ENCODE measurements at regions of chr11 and their contacts with region 1.

Region 1: GRCh38 chr11:65418711-65419459 is 3.7 kb upstream of the NEAT1 start:
- DNase-seq: peak; percentile 96 to 99 (median 98)
- H3K4me3 ChIP-seq: peak overlapping the region; percentile 25 to 100 (median 41)
- H3K4me3 Mint-ChIP-seq: peak overlapping the region; percentile 90 to 100
- H3K27ac ChIP-seq: peak overlapping the region; percentile 96 to 100
- H3K27ac Mint-ChIP-seq: peak overlapping the region; percentile 99 to 100 (median 100)
- H3K4me1 ChIP-seq: peaks cover 59 to 61% of the 10 kb centered on the region in 2 donors
- H3K4me1 Mint-ChIP-seq: peaks cover 45% of the 10 kb centered on the region
- H3K27me3 ChIP-seq: no peaks in the 10 kb centered on the region
- H3K27me3 Mint-ChIP-seq: peaks cover 0 to 23% (median 12%) of the 10 kb centered on the region in 3 donors
- CTCF ChIP-seq: no peak

Region 2: DNA sequence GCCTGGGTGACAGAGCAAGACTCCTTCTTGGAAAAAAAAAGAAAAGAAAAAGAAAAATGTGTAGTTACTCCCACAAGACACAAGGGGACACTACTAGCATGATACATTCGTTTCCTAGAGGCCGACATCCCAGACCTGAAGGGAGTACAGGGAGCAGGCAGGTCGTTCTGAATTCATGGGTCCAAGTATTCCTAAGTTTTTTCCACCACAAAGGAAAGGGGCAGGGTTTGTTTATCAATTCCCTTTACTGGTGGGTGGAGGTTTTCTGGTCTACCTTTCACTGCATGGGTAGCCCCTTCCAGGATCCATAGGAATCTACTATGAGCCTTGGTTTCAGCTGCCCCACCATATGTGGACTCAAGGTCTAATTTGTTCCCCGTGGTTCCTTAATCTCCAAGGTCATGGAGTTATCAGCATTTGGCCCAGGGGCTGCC is 52.5 kb before region 1 on chr11:
- intact Hi-C with region 1: loop called in 1 of 2 experiments (anchors 10 kb)
- DNase-seq: peak; percentile 51 to 72 (median 71)
- H3K4me3 ChIP-seq: no peak overlapping the region
- H3K4me3 Mint-ChIP-seq: no peak overlapping the region
- H3K27ac ChIP-seq: no peak overlapping the region
- H3K27ac Mint-ChIP-seq: no peak overlapping the region
- H3K4me1 ChIP-seq: peaks cover 30 to 37% of the 10 kb centered on the region in 2 donors
- H3K4me1 Mint-ChIP-seq: peaks cover 33% of the 10 kb centered on the region
- H3K27me3 ChIP-seq: no peaks in the 10 kb centered on the region
- H3K27me3 Mint-ChIP-seq: peaks cover 1 to 4% (median 1%) of the 10 kb centered on the region in 3 donors
- CTCF ChIP-seq: peak; percentile 82

Region 3: GRCh38 chr11:65382033-65382807 is 36.7 kb before region 1 on chr11 and contains the start of gene SLC25A45:
- intact Hi-C with region 1: loop called (anchors 2 to 5 kb)
- DNase-seq: peak; percentile 96 to 99 (median 98)
- H3K4me3 ChIP-seq: peak within 1 kb of the TSS; percentile 21 to 73 (median 54)
- H3K4me3 Mint-ChIP-seq: peak within 1 kb of the TSS; percentile 89 to 94
- H3K27ac ChIP-seq: peak within 1 kb of the TSS; percentile 89 to 100
- H3K27ac Mint-ChIP-seq: peak within 1 kb of the TSS; percentile 99 to 100 (median 100)
- H3K4me1 ChIP-seq: peaks cover 57 to 75% of the 10 kb centered on the region in 2 donors
- H3K4me1 Mint-ChIP-seq: peaks cover 58% of the 10 kb centered on the region
- H3K27me3 ChIP-seq: no peaks in the 10 kb centered on the region
- H3K27me3 Mint-ChIP-seq: peaks cover 0 to 2% (median 0%) of the 10 kb centered on the region in 3 donors
- CTCF ChIP-seq: peak; percentile 87
- polyA plus RNA-seq, gene SLC25A45: 3.7 to 11.3 (median 4.1) TPM

Region 4: GRCh38 chr11:65497141-65498041 is 78.5 kb after region 1 on chr11:
- intact Hi-C with region 1: loop called (anchors 1 to 2 kb)
- DNase-seq: peak; percentile 99
- H3K4me3 ChIP-seq: peak overlapping the region; percentile 96 to 100 (median 99)
- H3K4me3 Mint-ChIP-seq: peak overlapping the region; percentile 82 to 90
- H3K27ac ChIP-seq: peak overlapping the region; percentile 98
- H3K27ac Mint-ChIP-seq: peak overlapping the region in 5 of 7 donors; percentile 96 to 98 (median 98)
- H3K4me1 ChIP-seq: peaks cover 47 to 55% of the 10 kb centered on the region in 2 donors
- H3K4me1 Mint-ChIP-seq: peaks cover 40% of the 10 kb centered on the region
- H3K27me3 ChIP-seq: no peaks in the 10 kb centered on the region
- H3K27me3 Mint-ChIP-seq: no peaks in the 10 kb centered on the region
- CTCF ChIP-seq: no peak

Region 5: DNA sequence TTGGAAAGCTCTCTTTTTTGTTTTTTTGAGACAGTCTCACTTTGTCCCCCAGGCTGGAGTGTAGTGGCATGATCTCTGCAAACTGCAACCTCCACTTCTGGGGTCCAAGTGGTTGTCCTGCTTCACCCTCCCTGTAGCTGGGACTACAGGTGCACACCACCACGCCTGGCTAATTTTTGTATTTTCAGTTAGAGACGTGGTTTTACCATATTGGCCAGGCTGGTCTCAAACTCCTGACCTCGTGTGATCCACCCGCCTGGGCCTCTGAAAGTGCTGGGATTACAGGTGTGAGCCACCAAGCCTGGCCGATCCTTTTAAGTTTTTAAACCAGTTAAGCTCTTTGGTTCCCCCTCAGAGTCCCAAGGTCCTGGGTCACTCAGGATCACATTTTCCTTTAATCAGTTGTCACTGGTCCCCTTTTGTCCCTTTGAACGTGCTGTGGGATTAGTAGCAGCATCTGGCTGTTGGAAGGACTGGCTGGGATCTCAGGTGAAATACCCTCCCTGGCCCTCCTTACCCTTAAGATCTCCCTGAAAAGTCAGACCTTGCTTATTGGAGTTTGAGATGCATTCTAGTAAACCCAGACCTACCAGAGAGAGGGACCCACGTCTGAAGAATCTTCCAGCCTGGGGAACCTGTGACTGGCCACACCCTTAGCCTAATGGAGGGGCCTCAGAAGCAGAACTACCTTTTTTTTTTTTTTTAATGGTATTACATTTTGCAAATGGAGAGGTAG is 88.1 kb after region 1 on chr11:
- intact Hi-C with region 1: loop called in 1 of 2 experiments (anchors 2 kb)
- DNase-seq: peak in 1 of 3 donors; percentile 82
- H3K4me3 ChIP-seq: peak overlapping the region; percentile 96 to 100 (median 99)
- H3K4me3 Mint-ChIP-seq: peak overlapping the region in 1 of 2 donors; percentile 96
- H3K27ac ChIP-seq: peak overlapping the region; percentile 90 to 98
- H3K27ac Mint-ChIP-seq: peak overlapping the region in 5 of 7 donors; percentile 95 to 99 (median 98)
- H3K4me1 ChIP-seq: peaks cover 56 to 58% of the 10 kb centered on the region in 2 donors
- H3K4me1 Mint-ChIP-seq: peaks cover 57% of the 10 kb centered on the region
- H3K27me3 ChIP-seq: no peaks in the 10 kb centered on the region
- H3K27me3 Mint-ChIP-seq: peaks cover 0 to 2% (median 2%) of the 10 kb centered on the region in 3 donors
- CTCF ChIP-seq: no peak

Measured in CD14-positive monocyte (primary cell).